Activated CD8-positive, alpha-beta T cell treated with anti-CD3 and anti-CD28 coated beads for 36 hours (primary cell): ENCODE measurements at regions of chr15 and their contacts with region 1.

Region 1: GRCh38 chr15:23877502-23878412 is 190.7 kb upstream of the NDN start:
- DNase-seq: peak; percentile 56
- ATAC-seq: peak; percentile 34
- H3K4me3 Mint-ChIP-seq: no peak overlapping the region
- H3K27ac Mint-ChIP-seq: no peak overlapping the region
- H3K4me1 Mint-ChIP-seq: no peaks in the 10 kb centered on the region
- H3K27me3 Mint-ChIP-seq: no peaks in the 10 kb centered on the region
- CTCF ChIP-seq: peak; percentile 61

Region 2: DNA sequence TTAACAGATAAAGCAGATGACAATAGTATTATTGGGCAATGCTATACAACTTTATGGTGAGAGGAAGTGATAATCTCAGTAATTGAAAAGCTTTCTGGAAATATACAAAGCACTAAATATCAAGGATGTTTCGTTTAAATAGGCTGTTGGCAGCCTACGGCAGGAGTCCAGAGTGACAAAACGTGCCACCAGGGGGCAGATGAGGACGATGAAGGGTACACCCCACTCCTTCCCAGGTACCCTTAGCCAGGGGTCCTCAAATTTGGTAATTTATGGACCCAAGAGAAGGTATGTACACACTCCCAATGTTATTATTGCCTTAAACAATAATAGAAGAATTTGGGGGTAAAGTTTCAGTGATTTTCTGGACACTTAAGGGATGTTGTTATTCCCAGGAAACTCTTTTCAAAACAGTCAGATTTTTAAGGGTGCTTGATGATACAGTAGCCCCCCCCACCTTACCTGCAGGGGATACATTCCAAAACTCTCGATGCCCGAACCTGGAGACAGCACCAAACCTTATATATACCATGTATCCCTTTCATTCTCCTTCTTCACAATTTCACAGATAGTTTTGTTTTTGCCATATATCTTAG is 228.7 kb before region 1 on chr15:
- CTCF ChIA-PET with region 1: interaction called, 3 read pairs
- POLR2A ChIA-PET with region 1: no interaction called
- intact Hi-C with region 1: loop called (anchors 10 kb)
- DNase-seq: peak; percentile 57
- ATAC-seq: no peak
- H3K4me3 Mint-ChIP-seq: no peak overlapping the region
- H3K27ac Mint-ChIP-seq: no peak overlapping the region
- H3K4me1 Mint-ChIP-seq: no peaks in the 10 kb centered on the region
- H3K27me3 Mint-ChIP-seq: peaks cover 6% of the 10 kb centered on the region
- CTCF ChIP-seq: peak; percentile 66

Region 3: GRCh38 chr15:23912191-23912590 is 34.4 kb after region 1 on chr15:
- CTCF ChIA-PET with region 1: no interaction called
- POLR2A ChIA-PET with region 1: no interaction called
- intact Hi-C with region 1: no loop called
- DNase-seq: no peak
- ATAC-seq: no peak
- H3K4me3 Mint-ChIP-seq: no peak overlapping the region
- H3K27ac Mint-ChIP-seq: no peak overlapping the region
- H3K4me1 Mint-ChIP-seq: no peaks in the 10 kb centered on the region
- H3K27me3 Mint-ChIP-seq: no peaks in the 10 kb centered on the region
- CTCF ChIP-seq: no peak